ENCODE measurements at regions of chr9 and their contacts with region 1.

Region 1: GRCh38 chr9:83980395-83981125 is at the start of gene RMI1:
- DNase-seq: peak; percentile 98 to 99 (median 99)
- H3K4me3 ChIP-seq: peak within 1 kb of the TSS; percentile 90 to 99
- H3K4me3 Mint-ChIP-seq: peak within 1 kb of the TSS; percentile 94 to 100 (median 100)
- H3K27ac ChIP-seq: peak within 1 kb of the TSS; percentile 98
- H3K27ac Mint-ChIP-seq: peak within 1 kb of the TSS; percentile 98 to 100 (median 99)
- H3K4me1 ChIP-seq: peaks cover 40% of the 10 kb centered on the region
- H3K4me1 Mint-ChIP-seq: peaks cover 25 to 68% (median 36%) of the 10 kb centered on the region in 4 donors
- H3K27me3 ChIP-seq: no peaks in the 10 kb centered on the region
- H3K27me3 Mint-ChIP-seq: no peaks in the 10 kb centered on the region
- total RNA-seq, gene RMI1: 6.7 to 7.3 TPM

Region 2: GRCh38 chr9:83219152-83219923 is 761.2 kb before region 1 on chr9:
- CTCF ChIA-PET with region 1: no interaction called
- POLR2A ChIA-PET with region 1: no interaction called
- intact Hi-C with region 1: no loop called
- DNase-seq: no peak
- H3K4me3 ChIP-seq: no peak overlapping the region
- H3K4me3 Mint-ChIP-seq: peak overlapping the region in 6 of 8 donors; percentile 38 to 78 (median 66)
- H3K27ac ChIP-seq: no peak overlapping the region
- H3K27ac Mint-ChIP-seq: no peak overlapping the region
- H3K4me1 ChIP-seq: peaks cover 7% of the 10 kb centered on the region
- H3K4me1 Mint-ChIP-seq: no peaks in the 10 kb centered on the region
- H3K27me3 ChIP-seq: no peaks in the 10 kb centered on the region
- H3K27me3 Mint-ChIP-seq: peaks cover 10 to 32% of the 10 kb centered on the region in 2 donors

Region 3: GRCh38 chr9:83622939-83623678 is 357.5 kb before region 1 on chr9 and contains the start of gene IDNK:
- CTCF ChIA-PET with region 1: interaction called, 4 read pairs
- POLR2A ChIA-PET with region 1: interaction called, 18 read pairs
- intact Hi-C with region 1: loop called (anchors 1 kb)
- DNase-seq: peak; percentile 66 to 72 (median 69)
- H3K4me3 ChIP-seq: peak within 1 kb of the TSS; percentile 30 to 63
- H3K4me3 Mint-ChIP-seq: peak within 1 kb of the TSS; percentile 92 to 99 (median 95)
- H3K27ac ChIP-seq: peak within 1 kb of the TSS; percentile 82
- H3K27ac Mint-ChIP-seq: peak within 1 kb of the TSS; percentile 85 to 97 (median 94)
- H3K4me1 ChIP-seq: peaks cover 24% of the 10 kb centered on the region
- H3K4me1 Mint-ChIP-seq: peaks cover 21 to 41% (median 33%) of the 10 kb centered on the region in 4 donors
- H3K27me3 ChIP-seq: no peaks in the 10 kb centered on the region
- H3K27me3 Mint-ChIP-seq: no peaks in the 10 kb centered on the region
- total RNA-seq, gene IDNK: 10.1 to 10.2 TPM

Region 4: DNA sequence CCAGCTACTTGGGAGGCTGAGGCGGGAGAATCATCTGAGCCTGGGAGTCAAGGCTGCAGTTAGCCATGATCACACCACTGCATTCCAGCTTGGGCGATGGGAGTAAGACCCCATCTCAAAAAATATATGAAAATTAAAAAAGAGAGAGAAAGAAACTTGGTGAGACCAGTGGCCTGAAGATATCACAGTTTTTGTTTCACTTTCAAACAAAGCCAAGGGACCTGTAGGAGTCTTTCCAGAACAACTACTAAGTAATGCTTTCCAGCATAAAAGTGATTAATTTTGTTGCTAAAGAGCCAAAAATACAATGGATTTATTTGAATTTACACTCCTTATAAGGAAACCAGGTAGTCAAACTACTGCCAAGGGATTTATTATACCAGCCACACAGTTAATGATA is 186.5 kb before region 1 on chr9:
- CTCF ChIA-PET with region 1: no interaction called
- POLR2A ChIA-PET with region 1: no interaction called
- intact Hi-C with region 1: no loop called
- DNase-seq: no peak
- H3K4me3 ChIP-seq: no peak overlapping the region
- H3K4me3 Mint-ChIP-seq: peak overlapping the region in 1 of 8 donors; percentile 17
- H3K27ac ChIP-seq: no peak overlapping the region
- H3K27ac Mint-ChIP-seq: no peak overlapping the region
- H3K4me1 ChIP-seq: no peaks in the 10 kb centered on the region
- H3K4me1 Mint-ChIP-seq: peaks cover 0 to 3% (median 0%) of the 10 kb centered on the region in 4 donors
- H3K27me3 ChIP-seq: no peaks in the 10 kb centered on the region
- H3K27me3 Mint-ChIP-seq: no peaks in the 10 kb centered on the region

Region 5: GRCh38 chr9:83956434-83957247 is 23.9 kb before region 1 on chr9:
- CTCF ChIA-PET with region 1: interaction called, 8 read pairs
- POLR2A ChIA-PET with region 1: interaction called, 52 read pairs
- intact Hi-C with region 1: loop called (anchors 1 kb)
- DNase-seq: peak; percentile 38 to 60 (median 41)
- H3K4me3 ChIP-seq: peak overlapping the region; percentile 83 to 98
- H3K4me3 Mint-ChIP-seq: peak overlapping the region; percentile 94 to 98 (median 98)
- H3K27ac ChIP-seq: peak overlapping the region; percentile 71
- H3K27ac Mint-ChIP-seq: peak overlapping the region; percentile 83 to 97 (median 92)
- H3K4me1 ChIP-seq: peaks cover 21% of the 10 kb centered on the region
- H3K4me1 Mint-ChIP-seq: peaks cover 11 to 26% (median 17%) of the 10 kb centered on the region in 4 donors
- H3K27me3 ChIP-seq: no peaks in the 10 kb centered on the region
- H3K27me3 Mint-ChIP-seq: no peaks in the 10 kb centered on the region

Region 6: DNA sequence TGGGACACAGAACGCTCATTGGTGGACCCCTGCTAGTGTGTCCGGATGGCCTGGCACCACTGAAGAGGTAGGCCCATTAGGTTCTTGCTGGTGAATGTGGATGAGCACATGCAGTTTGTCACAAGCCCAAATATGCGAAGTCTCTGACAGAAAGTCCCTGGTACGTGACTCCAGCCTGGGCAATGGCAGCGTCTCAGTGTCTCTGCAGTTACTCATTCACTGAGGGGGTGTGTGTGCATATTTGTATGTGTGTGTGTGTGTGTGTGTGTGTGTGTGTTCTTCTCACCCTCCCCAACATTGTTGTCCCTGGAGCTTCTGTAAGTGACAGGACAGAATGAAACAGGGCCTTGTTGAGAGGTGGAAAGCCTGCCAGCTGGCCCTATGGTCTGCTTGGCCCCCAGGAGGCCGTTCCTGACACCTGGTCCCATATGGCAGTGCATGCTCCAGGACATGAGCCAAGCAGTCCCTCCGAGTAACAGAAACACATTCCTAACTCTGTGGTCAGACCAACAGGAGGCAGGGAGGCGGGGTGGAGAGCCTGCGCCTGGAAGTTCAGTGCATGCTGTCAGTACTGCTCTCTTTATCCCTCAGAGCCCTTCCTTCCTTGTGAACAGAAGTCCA is 190.1 kb after region 1 on chr9:
- CTCF ChIA-PET with region 1: interaction called, 6 read pairs
- POLR2A ChIA-PET with region 1: interaction called, 6 read pairs
- intact Hi-C with region 1: loop called (anchors 1 kb)
- DNase-seq: no peak
- H3K4me3 ChIP-seq: no peak overlapping the region
- H3K4me3 Mint-ChIP-seq: no peak overlapping the region
- H3K27ac ChIP-seq: no peak overlapping the region
- H3K27ac Mint-ChIP-seq: no peak overlapping the region
- H3K4me1 ChIP-seq: no peaks in the 10 kb centered on the region
- H3K4me1 Mint-ChIP-seq: no peaks in the 10 kb centered on the region
- H3K27me3 ChIP-seq: no peaks in the 10 kb centered on the region
- H3K27me3 Mint-ChIP-seq: peaks cover 3% of the 10 kb centered on the region in 2 donors

Region 7: GRCh38 chr9:85940832-85941621 is 1960.5 kb after region 1 on chr9 and contains the start of gene NAA35:
- CTCF ChIA-PET with region 1: no interaction called
- POLR2A ChIA-PET with region 1: interaction called, 4 read pairs
- intact Hi-C with region 1: loop called (anchors 1 kb)
- DNase-seq: peak; percentile 99
- H3K4me3 ChIP-seq: peak within 1 kb of the TSS; percentile 43 to 73
- H3K4me3 Mint-ChIP-seq: peak within 1 kb of the TSS; percentile 85 to 95 (median 89)
- H3K27ac ChIP-seq: peak within 1 kb of the TSS; percentile 87
- H3K27ac Mint-ChIP-seq: peak within 1 kb of the TSS in 6 of 7 donors; percentile 91 to 99 (median 96)
- H3K4me1 ChIP-seq: peaks cover 45% of the 10 kb centered on the region
- H3K4me1 Mint-ChIP-seq: peaks cover 12 to 19% (median 16%) of the 10 kb centered on the region in 4 donors
- H3K27me3 ChIP-seq: no peaks in the 10 kb centered on the region
- H3K27me3 Mint-ChIP-seq: no peaks in the 10 kb centered on the region
- total RNA-seq, gene NAA35: 24.8 to 27.8 TPM